ENCODE measurements at regions of chr3 and their contacts with region 1.

Region 1: GRCh38 chr3:52176951-52177700 is 20.8 kb upstream of the ALAS1 start:
- DNase-seq: no peak
- CTCF ChIP-seq: no peak

Region 2: DNA sequence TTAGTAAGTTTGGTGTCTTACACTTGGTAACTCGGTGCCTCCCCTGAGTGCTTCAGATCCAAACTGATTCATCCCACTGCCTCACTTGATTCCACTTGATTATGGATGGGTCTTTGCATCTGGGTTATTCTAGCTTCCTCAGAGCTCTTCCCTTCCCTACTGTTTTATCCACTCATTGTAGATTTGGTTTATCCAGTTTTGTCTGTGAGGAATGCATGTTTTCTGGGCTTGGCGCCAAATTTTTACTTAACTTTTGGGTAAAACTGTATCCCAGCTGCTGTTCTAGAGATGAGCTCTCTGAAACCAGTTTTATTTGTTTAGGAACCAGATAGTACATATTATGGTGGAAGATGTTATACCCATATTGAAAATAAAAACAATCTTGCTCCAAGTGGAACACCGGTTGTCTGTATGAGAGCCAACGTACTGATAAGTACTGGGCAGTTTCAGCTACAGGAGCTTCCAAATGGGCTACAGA is 617.7 kb before region 1 on chr3:
- CTCF ChIA-PET with region 1: no interaction called
- POLR2A ChIA-PET with region 1: interaction called, 12 read pairs
- DNase-seq: no peak
- CTCF ChIP-seq: no peak

Region 3: DNA sequence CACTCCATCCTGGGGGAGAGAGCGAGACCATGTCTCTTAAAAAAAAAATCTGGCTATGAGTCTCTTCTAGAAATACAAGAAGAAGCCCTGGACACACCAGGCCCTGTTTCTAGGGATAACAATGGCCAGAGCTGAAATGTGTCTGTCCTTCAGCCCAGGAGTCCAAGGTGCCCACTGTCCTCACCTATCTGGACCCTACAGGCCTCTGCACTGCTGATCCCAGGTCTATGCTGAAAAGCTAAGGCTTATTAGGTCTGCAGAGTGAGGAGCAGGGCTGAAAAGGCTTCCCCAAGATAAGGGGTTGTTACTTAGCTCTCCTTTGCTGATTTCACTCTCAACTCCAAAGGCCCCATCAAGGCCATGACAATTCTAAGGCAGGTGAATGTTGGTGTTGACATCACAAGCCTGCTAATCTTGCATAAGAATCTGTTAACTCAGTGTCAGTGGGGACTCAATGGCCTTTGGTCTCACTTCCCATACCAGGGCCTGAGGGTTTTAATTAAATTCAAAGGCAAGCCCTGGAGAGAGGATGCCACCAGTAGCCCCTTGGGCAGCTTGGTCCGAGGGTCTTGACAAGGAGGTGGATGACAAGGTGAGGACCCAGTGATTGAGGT is 11.3 kb after region 1 on chr3:
- CTCF ChIA-PET with region 1: interaction called, 17 read pairs
- POLR2A ChIA-PET with region 1: no interaction called
- DNase-seq: no peak
- CTCF ChIP-seq: no peak